RWPE1 (cell line): ENCODE measurements at regions of chr10 and their contacts with region 1.

Region 1: DNA sequence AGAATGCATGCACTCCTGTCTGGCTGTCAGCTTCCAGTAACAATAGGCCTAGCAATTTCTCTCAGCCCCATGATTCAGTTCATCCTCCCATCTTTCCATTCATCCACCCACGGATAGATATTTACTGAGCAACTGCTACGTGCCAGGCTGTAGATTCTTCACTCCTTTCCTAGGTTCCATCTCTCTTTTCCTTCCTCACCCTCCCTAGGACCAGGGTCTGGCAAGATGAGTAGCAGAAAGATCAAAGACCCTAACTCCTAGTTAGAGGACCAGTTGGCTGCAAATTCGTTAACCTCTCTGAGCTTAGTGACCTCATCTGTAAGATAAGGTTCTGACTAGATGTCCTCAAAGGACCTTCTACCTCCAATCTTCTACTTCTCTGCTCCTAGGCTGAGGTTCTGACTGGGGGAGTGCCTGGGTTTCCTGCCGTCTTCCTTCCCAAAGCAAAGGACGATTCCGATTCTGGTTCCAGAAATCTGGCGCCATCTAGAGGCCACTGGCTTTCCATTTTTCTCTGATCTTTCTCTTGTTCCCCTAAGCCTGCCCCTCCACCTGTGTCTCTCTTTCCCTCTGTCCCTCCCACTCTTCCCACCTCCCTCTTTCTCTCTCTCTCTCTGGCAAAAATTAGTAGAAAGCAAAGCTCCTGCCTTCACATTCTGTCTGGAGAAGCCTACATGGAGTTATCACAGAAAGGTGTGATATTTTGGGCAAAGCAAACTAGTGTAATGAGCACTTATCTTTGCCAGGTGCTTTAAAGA is 26.2 kb downstream of the TBATA start:
- DNase-seq: peak; percentile 71
- H3K27ac ChIP-seq: no peak overlapping the region
- CTCF ChIP-seq: peak; percentile 67

Region 2: DNA sequence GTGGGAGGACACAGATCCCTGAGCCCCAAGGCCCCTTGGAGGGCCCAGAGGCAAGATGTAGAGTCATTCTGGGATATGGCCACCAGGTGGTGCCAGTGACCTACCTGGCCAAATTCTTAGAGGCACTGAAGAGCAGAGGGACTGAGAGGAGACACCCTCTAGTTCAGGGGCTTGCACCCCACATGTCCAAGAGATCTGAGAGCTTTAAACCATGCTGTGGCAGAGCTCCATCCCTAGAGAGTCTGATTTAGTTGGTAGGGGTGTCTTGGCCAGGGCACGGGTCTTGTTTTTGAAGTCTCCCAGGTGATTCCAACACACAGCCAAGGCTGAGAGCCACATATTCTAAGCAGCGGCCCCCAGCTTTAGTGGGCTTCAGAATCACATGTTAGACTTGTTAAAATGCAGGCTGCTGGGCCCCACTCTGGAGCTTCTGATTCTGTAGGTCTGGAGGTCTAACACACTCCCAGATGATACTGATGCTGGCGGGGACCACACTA is 208.9 kb before region 1 on chr10:
- CTCF ChIA-PET with region 1: interaction called, 24 read pairs
- POLR2A ChIA-PET with region 1: interaction called, 3 read pairs
- DNase-seq: peak; percentile 80
- H3K27ac ChIP-seq: no peak overlapping the region
- CTCF ChIP-seq: peak; percentile 82

Region 3: GRCh38 chr10:70634011-70634410 is 124.9 kb before region 1 on chr10:
- CTCF ChIA-PET with region 1: interaction called, 11 read pairs
- POLR2A ChIA-PET with region 1: no interaction called
- DNase-seq: peak; percentile 81
- H3K27ac ChIP-seq: no peak overlapping the region
- CTCF ChIP-seq: no peak